MCF 10A (cell line): ENCODE measurements at regions of chr16 and their contacts with region 1.

Region 1: GRCh38 chr16:24499193-24499814 is 40.1 kb upstream of the RBBP6 start:
- DNase-seq: peak; percentile 66
- H3K4me3 Mint-ChIP-seq: no peak overlapping the region
- H3K27ac Mint-ChIP-seq: no peak overlapping the region
- H3K4me1 Mint-ChIP-seq: peaks cover 7% of the 10 kb centered on the region
- H3K27me3 Mint-ChIP-seq: no peaks in the 10 kb centered on the region
- CTCF ChIP-seq: peak; percentile 73

Region 2: GRCh38 chr16:24228514-24228913 is 270.8 kb before region 1 on chr16:
- CTCF ChIA-PET with region 1: no interaction called
- POLR2A ChIA-PET with region 1: no interaction called
- intact Hi-C with region 1: no loop called
- DNase-seq: no peak
- H3K4me3 Mint-ChIP-seq: no peak overlapping the region
- H3K27ac Mint-ChIP-seq: no peak overlapping the region
- H3K4me1 Mint-ChIP-seq: no peaks in the 10 kb centered on the region
- H3K27me3 Mint-ChIP-seq: peaks cover 33% of the 10 kb centered on the region
- CTCF ChIP-seq: no peak

Region 3: DNA sequence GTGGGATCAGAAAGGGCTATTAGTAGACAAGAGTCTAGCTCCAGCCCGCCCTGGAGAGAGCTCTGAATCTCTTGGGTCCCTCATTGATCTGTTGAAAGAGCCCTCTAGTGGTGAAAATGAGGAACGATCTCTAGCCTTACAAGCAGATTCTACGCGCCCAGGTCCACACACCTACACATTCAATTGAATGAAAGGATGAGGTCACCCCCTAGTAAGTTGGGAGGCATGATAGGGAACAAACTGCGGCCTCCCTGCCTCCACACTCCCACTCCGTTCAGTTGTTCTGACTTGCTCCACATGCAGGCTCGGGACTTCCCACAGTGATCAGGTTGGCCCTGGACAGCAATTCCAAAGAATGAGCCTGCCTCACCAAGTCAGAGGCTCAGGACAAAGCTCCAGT is 246.1 kb before region 1 on chr16:
- CTCF ChIA-PET with region 1: interaction called, 25 read pairs
- POLR2A ChIA-PET with region 1: no interaction called
- intact Hi-C with region 1: loop called (anchors 1 kb)
- DNase-seq: peak; percentile 60
- H3K4me3 Mint-ChIP-seq: no peak overlapping the region
- H3K27ac Mint-ChIP-seq: no peak overlapping the region
- H3K4me1 Mint-ChIP-seq: peaks cover 6% of the 10 kb centered on the region
- H3K27me3 Mint-ChIP-seq: peaks cover 52% of the 10 kb centered on the region
- CTCF ChIP-seq: peak; percentile 61

Region 4: DNA sequence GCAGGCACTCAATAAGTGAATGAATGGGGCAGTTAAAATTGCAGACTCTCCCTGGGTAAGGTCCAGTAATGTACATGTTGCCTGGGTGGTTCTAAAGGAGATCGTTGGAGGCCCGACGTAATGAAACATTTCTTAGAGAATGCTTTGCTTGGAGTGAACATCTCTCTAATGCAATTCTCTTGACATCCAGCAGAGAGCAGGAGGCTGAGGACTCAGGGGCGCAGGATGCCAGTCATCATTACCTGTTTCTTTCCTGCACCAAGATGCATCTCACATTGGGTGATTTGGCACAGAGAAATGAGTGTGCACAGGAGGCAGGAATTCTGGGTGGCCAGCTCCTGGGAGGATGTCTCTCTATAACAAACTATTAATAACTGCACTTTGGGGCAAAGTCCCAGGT is 90.3 kb before region 1 on chr16:
- CTCF ChIA-PET with region 1: interaction called, 4 read pairs
- POLR2A ChIA-PET with region 1: no interaction called
- intact Hi-C with region 1: loop called (anchors 1 kb)
- DNase-seq: peak; percentile 38
- H3K4me3 Mint-ChIP-seq: no peak overlapping the region
- H3K27ac Mint-ChIP-seq: no peak overlapping the region
- H3K4me1 Mint-ChIP-seq: no peaks in the 10 kb centered on the region
- H3K27me3 Mint-ChIP-seq: peaks cover 7% of the 10 kb centered on the region
- CTCF ChIP-seq: peak; percentile 39

Region 5: DNA sequence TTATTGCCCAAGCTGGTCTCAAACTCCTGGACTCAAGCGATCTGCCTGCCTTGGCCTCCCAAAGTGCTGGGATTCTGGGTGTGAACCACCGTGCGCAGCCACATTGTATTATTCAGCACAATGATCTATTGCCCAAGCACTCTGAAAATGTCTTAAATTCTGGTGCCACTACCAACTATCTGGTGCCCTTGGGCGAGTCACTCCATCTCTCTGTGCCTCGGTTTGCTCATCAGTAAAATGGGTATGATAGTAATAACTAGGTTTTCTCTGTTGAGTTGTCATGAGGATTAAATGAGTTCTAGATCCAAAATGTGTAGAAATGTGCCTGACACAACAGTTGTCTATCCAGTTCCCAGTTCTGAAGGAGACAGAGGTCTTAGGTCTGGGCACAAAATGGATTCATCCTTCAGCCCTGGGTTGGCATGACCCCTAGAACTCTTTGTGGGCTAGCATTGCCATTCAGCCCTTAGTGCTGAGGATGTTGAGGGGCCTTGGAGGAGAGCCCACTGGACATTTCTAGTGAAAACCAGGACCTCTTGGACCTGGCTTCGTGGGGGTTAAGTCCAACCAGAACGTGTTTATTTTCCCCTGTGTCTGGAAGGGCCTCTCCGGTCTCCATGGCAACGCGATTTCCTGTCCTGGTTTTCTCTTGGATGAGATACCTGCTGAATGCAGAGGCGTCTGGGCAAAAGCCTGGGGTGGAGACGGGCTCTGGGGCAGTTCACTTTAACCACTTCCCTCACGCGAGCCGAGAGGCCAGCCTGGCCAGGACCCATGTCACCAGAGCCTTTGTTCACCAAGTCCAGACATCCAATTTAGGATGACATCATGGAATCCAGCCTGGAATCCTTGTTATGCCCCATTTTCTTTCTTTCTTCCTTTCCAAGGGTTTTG is 186.5 kb after region 1 on chr16:
- CTCF ChIA-PET with region 1: no interaction called
- POLR2A ChIA-PET with region 1: no interaction called
- intact Hi-C with region 1: no loop called
- DNase-seq: no peak
- H3K4me3 Mint-ChIP-seq: no peak overlapping the region
- H3K27ac Mint-ChIP-seq: peak overlapping the region; percentile 81
- H3K4me1 Mint-ChIP-seq: peaks cover 6% of the 10 kb centered on the region
- H3K27me3 Mint-ChIP-seq: no peaks in the 10 kb centered on the region
- CTCF ChIP-seq: no peak